ENCODE measurements at regions of chr19 and their contacts with region 1.

Region 1: GRCh38 chr19:10269333-10270179 is 1.4 kb upstream of the ICAM1 start:
- DNase-seq: peak; percentile 76
- H3K4me3 ChIP-seq: peak overlapping the region; percentile 19 to 28
- H3K27ac ChIP-seq: peak overlapping the region; percentile 47 to 52
- H3K4me1 ChIP-seq: no peaks in the 10 kb centered on the region
- H3K27me3 ChIP-seq: no peaks in the 10 kb centered on the region
- CTCF ChIP-seq: peak; percentile 83 to 97 (median 90)
- POLR2A ChIP-seq: no peak

Region 2: DNA sequence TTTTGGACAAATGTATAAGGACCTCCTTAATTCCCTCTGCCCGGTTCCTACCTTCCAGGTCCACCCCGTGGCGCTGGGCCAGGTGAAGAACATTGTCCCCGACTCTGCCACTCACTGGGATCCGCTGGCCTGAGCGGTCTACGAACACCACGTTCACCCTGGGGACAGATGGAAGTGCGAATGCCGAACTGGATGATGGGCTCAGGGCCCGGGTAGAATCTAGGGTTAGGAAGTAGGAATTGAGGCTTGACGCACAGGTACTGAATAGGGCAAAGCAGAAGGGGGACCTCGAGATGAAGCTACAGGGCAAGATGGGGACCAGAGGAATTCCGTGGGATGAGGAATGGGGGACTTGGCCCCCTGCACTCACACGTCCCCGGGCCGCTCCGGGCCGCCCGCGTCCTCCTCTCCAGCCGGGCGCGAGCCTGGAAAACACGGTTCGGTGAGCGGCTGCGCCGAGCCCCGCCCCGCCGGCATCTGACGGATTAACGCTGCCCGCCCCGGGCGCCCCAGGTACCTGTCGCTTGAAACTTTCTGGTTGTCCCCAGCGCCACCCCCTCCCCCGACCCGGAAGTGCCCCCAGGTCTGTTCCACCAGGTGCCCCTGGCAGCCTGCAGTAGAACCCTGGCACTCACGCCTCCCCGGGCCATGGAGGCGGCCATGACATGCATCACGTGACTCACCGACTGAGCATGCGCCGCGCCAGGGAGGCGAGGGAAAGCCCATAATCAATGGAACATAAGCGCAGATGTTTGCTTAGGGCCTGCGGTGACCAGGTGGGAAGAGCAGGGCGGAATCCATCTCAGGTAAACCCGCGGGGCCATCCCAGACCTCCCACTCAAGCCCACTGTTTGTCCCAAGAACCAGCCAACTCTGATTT is 46.0 kb after region 1 on chr19 and contains the start of gene FDX2:
- intact Hi-C with region 1: loop called (anchors 5 kb)
- DNase-seq: peak; percentile 80
- H3K4me3 ChIP-seq: peak within 1 kb of the TSS; percentile 66 to 94
- H3K27ac ChIP-seq: peak within 1 kb of the TSS; percentile 57 to 70
- H3K4me1 ChIP-seq: no peaks in the 10 kb centered on the region
- H3K27me3 ChIP-seq: no peaks in the 10 kb centered on the region
- CTCF ChIP-seq: peak in 1 of 4 experiments; percentile 2
- POLR2A ChIP-seq: no peak
- total RNA-seq, gene FDX2: 20.9 to 29.9 TPM

Region 3: DNA sequence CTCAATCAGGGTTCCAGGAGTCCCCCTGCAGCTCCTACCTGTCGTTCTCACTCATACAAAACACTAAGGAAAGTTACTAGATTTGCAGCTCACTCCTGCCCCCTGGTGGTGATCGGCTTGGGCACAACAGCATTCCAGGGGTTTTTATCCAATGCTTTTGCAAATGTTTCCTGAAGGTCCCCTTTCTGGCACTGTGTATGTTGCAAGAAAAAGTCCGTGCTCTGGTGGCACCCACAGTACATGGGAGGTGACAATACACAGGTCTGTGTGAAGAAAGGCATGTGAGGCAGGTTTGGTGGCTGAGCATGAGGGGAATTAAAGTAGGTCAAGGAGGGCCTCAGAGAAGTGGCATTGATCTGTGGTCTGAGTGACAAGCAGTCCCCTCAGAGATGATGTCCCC is 119.4 kb after region 1 on chr19:
- intact Hi-C with region 1: loop called (anchors 2 kb)
- DNase-seq: peak; percentile 81
- H3K4me3 ChIP-seq: no peak overlapping the region
- H3K27ac ChIP-seq: no peak overlapping the region
- H3K4me1 ChIP-seq: no peaks in the 10 kb centered on the region
- H3K27me3 ChIP-seq: no peaks in the 10 kb centered on the region
- CTCF ChIP-seq: peak; percentile 80 to 96 (median 90)
- POLR2A ChIP-seq: no peak

Measured in prostate gland (tissue), 2 donors.